Heart left ventricle (tissue), 16 donors: ENCODE measurements at regions of chrX and their contacts with region 1.

Region 1: GRCh38 chrX:63708801-63709200 is 76.2 kb downstream of the ARHGEF9 start:
- DNase-seq: no peak
- ATAC-seq: no peak
- H3K4me3 ChIP-seq: no peak overlapping the region
- H3K27ac ChIP-seq: no peak overlapping the region
- H3K4me1 ChIP-seq: peaks cover 0 to 4% (median 0%) of the 10 kb centered on the region in 12 donors
- H3K27me3 ChIP-seq: no peaks in the 10 kb centered on the region
- CTCF ChIP-seq: no peak
- POLR2A ChIP-seq: no peak

Region 2: DNA sequence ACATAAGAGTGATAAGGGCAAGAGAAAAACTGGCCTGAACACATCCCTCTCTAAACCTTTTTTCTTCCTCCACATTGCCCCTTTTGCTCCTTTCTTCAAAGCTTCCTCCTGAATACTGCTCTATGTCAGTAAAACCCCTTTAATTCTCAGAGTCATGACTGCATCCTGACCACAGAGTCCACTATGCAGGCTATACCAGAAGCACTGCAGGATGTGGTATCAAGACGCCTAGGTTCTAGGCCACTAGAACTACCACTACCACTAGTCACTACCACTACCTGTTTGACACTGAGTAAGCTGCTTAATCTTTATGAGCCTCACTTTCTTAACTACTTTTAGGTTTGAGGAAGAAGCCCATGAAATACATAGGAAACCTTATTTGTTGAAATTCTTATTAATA is 37.5 kb after region 1 on chrX:
- intact Hi-C with region 1: loop called in 1 of 10 experiments (anchors 5 kb)
- DNase-seq: no peak
- ATAC-seq: no peak
- H3K4me3 ChIP-seq: no peak overlapping the region
- H3K27ac ChIP-seq: peak overlapping the region in 5 of 12 donors; percentile 47 to 81 (median 57)
- H3K4me1 ChIP-seq: peaks cover 0 to 61% (median 8%) of the 10 kb centered on the region in 12 donors
- H3K27me3 ChIP-seq: no peaks in the 10 kb centered on the region
- CTCF ChIP-seq: no peak
- POLR2A ChIP-seq: no peak